ENCODE measurements at regions of chr7 and their contacts with region 1.

Region 1: GRCh38 chr7:20219446-20220292 is 2.5 kb upstream of the MACC1 start:
- DNase-seq: peak; percentile 84 to 91 (median 85)
- ATAC-seq: peak; percentile 87
- H3K4me3 ChIP-seq: no peak overlapping the region
- H3K4me1 ChIP-seq: peaks cover 24% of the 10 kb centered on the region
- CTCF ChIP-seq: no peak

Region 2: GRCh38 chr7:19708397-19709248 is 511.0 kb before region 1 on chr7 and contains the start of gene POLR1F:
- intact Hi-C with region 1: no loop called
- DNase-seq: peak; percentile 95 to 98 (median 96)
- ATAC-seq: peak; percentile 100
- H3K4me3 ChIP-seq: peak within 1 kb of the TSS; percentile 73
- H3K4me1 ChIP-seq: peaks cover 10% of the 10 kb centered on the region
- CTCF ChIP-seq: peak; percentile 83
- total RNA-seq, gene POLR1F: 5.8 to 13.3 (median 7.7) TPM

Region 3: GRCh38 chr7:19958309-19958896 is 261.3 kb before region 1 on chr7:
- intact Hi-C with region 1: no loop called
- DNase-seq: no peak
- ATAC-seq: no peak
- H3K4me3 ChIP-seq: no peak overlapping the region
- H3K4me1 ChIP-seq: no peaks in the 10 kb centered on the region
- CTCF ChIP-seq: no peak

Region 4: DNA sequence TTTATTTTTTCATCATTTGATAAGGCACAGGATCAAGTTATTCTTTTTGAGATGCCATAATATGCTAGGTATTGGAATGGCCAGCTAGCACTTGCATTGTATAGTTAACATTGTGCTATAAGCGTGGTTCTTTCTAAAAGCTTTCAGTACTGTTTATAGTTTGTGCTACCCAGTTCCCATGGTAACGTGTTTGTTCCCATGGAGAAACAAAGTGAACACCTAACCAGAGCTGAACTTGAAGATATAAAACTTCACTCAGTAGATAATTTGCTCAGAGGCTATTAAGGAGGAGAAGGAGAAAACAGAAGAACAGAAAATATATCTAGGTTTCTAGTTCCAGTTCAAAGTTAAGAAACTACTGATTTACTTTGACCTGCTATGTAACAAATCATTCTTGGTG is 87.5 kb after region 1 on chr7:
- intact Hi-C with region 1: loop called in 1 of 2 experiments (anchors 10 kb)
- DNase-seq: no peak
- ATAC-seq: peak; percentile 67
- H3K4me3 ChIP-seq: no peak overlapping the region
- H3K4me1 ChIP-seq: peaks cover 10% of the 10 kb centered on the region
- CTCF ChIP-seq: no peak